ENCODE measurements at regions of chr19 and their contacts with region 1.

Region 1: GRCh38 chr19:6460101-6460853 is 685 bp upstream of the SLC25A23 start:
- DNase-seq: peak; percentile 98
- H3K4me3 Mint-ChIP-seq: peak overlapping the region; percentile 91
- H3K27ac Mint-ChIP-seq: peak overlapping the region; percentile 88
- H3K4me1 Mint-ChIP-seq: peaks cover 21% of the 10 kb centered on the region
- H3K27me3 Mint-ChIP-seq: no peaks in the 10 kb centered on the region

Region 2: DNA sequence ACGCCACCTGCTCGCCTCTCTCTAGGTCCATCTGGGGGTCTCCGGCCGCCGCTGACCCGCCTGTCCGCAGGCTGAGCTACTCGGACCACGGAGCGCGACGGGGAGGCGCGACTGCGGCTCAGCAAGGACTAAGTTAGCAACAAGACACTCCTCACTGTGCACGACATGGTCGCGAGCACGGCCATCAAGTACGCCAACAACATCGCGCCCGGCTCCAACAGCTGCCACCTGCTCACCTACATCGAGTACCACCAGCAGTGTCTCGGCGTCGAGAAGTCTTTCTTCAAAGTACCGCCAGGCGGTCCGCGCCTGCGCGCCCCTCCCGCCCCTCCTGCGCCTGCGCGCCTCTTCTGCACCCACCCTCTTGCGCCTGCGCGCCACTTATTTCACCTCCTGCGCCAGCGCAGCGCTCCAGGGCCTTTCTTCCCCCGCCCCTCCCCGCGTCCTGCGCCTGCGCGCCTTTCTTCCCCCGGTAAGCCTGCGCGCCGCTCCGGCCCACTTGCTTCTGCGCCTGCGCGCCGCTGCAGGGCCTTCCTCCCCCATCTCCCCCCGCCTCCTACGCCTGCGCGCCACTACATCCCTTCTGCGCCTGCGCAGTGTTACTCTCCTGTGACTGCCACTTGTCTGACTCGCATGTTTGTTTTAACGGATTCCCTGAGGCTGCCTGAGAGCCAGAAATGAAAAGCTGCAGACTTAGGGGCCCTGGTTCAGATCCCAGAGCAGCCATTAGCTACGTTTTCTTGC is 260.9 kb before region 1 on chr19:
- CTCF ChIA-PET with region 1: no interaction called
- POLR2A ChIA-PET with region 1: no interaction called
- intact Hi-C with region 1: loop called (anchors 1 kb)
- DNase-seq: peak; percentile 100
- H3K4me3 Mint-ChIP-seq: peak overlapping the region; percentile 98
- H3K27ac Mint-ChIP-seq: peak overlapping the region; percentile 84
- H3K4me1 Mint-ChIP-seq: peaks cover 13% of the 10 kb centered on the region
- H3K27me3 Mint-ChIP-seq: peaks cover 1% of the 10 kb centered on the region

Region 3: GRCh38 chr19:6393074-6393983 is 66.9 kb before region 1 on chr19 and contains the start of gene GTF2F1:
- CTCF ChIA-PET with region 1: no interaction called
- POLR2A ChIA-PET with region 1: no interaction called
- intact Hi-C with region 1: loop called (anchors 2 kb)
- DNase-seq: peak; percentile 94
- H3K4me3 Mint-ChIP-seq: peak within 1 kb of the TSS; percentile 94
- H3K27ac Mint-ChIP-seq: peak within 1 kb of the TSS; percentile 93
- H3K4me1 Mint-ChIP-seq: peaks cover 24% of the 10 kb centered on the region
- H3K27me3 Mint-ChIP-seq: no peaks in the 10 kb centered on the region
- total RNA-seq, gene GTF2F1: 67.0 to 70.9 TPM

Region 4: DNA sequence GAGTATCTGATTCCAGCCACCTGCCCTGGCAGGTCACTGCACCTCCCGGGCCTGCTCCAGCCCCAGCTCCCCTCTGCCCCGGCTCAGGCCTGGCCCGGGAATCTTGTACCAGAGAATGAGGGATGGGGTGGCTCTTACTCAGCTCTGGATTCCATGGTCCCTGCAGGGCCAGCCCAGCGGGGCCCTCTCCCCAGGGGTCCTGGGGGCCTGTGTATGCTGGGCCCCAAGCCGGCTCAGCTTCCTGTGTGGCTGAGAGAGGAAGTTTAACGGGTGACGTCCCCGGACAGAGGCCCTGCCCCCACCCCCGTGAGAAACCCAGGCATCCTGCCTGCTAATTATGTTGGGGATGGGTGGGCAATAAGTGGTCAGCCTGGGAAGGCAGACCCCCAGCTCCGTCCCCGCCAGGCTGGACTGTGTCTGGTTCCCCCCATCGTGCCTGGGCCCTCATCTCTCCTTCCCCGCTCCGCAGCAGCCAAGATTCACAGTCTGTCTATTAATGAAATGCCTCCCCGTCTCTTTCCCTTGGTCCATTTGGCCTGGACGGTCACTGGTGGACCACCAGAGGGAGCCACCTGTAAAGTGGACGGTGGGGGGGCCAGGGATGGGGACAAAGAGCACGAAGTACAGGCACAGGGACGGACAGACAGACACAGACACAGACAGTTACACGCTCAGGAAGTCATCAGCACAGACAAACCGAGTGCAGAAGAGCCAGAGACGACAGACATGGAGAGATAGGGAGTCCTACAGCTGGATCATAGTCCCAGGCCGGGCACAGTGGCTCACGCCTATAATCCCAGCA is 21.5 kb after region 1 on chr19 and contains the start of gene DENND1C:
- CTCF ChIA-PET with region 1: interaction called, 5 read pairs
- POLR2A ChIA-PET with region 1: interaction called, 3 read pairs
- intact Hi-C with region 1: loop called (anchors 1 kb)
- DNase-seq: peak; percentile 85
- H3K4me3 Mint-ChIP-seq: peak within 1 kb of the TSS; percentile 100
- H3K27ac Mint-ChIP-seq: peak within 1 kb of the TSS; percentile 98
- H3K4me1 Mint-ChIP-seq: peaks cover 30% of the 10 kb centered on the region
- H3K27me3 Mint-ChIP-seq: no peaks in the 10 kb centered on the region
- total RNA-seq, gene DENND1C: 62.1 to 69.3 TPM

Region 5: DNA sequence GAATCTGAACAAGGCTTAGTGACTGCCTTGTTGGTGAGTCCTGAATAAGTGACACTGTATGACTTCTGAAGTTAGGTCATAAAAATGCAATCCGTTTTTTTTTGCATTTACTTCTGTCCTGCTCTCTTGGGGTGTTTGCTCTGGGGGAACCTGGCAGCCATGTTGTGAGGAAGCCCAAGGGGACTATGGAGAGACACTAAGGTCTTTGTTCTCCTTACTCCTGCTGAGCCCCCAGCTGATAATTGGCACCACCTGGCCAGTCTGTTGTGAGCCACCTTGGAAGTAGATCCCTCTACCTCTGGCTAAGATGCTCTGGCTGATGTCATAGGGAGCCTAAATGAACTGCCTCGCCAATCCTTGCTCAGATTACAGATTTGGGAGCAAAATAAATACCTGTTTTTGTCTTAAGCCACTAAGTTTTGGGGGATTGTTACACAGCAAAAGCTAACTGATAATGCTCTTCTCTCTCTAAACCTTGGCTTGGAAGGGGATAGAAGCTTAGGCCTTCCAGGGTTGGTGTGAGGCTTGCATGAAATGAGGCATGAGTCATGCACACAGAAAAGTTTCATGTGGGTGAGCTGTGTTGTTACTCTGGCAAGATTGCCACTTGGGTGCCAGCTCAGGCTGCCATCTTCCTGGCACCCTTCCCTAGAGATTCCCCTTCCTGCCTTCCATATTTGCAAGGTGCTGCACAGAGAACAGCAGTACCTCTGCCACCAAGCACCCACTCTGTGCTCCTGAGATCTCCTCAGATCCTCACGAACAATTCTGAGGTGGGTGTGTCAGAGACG is 31.7 kb after region 1 on chr19:
- CTCF ChIA-PET with region 1: no interaction called
- POLR2A ChIA-PET with region 1: no interaction called
- intact Hi-C with region 1: no loop called
- DNase-seq: no peak
- H3K4me3 Mint-ChIP-seq: no peak overlapping the region
- H3K27ac Mint-ChIP-seq: no peak overlapping the region
- H3K4me1 Mint-ChIP-seq: peaks cover 16% of the 10 kb centered on the region
- H3K27me3 Mint-ChIP-seq: no peaks in the 10 kb centered on the region

Region 6: DNA sequence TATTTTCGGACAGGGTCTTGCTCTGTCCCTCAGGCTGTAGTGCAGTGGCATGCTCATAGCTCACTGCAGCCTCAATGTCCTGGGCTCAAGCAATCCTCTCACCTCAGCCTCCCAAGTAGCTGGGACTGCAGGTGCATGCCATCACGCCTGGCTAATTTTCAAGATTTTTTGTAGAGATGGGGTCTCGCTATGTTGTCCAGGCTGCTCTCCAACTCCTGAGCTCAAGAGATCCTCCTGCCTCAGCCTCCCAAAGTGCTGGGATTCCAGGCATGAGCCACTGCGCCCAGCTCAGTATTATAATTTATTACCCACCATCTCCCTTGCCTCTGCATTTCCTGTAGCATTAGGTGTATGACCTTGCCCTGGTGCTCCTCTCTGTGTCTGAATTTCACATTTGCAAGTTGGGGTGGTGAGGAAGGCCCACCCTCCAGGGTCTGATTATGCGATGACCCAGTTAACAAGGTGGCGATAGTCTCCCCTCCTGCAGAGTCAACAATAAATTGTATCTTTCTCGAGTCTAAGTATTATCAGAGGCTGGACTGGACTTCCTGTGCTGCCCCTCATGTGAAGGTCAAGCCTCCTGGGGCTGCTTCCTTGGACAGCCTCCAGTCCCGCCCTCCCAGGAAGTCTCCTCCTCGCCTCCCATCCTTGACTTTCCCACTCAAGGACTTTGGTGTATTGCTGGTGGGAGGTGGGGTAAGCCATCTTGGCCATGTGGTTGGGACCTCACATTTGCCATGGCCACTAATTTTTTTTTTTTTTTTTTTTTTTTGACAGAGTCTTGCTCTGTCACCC is 43.3 kb after region 1 on chr19:
- CTCF ChIA-PET with region 1: no interaction called
- POLR2A ChIA-PET with region 1: no interaction called
- intact Hi-C with region 1: loop called (anchors 2 kb)
- DNase-seq: no peak
- H3K4me3 Mint-ChIP-seq: no peak overlapping the region
- H3K27ac Mint-ChIP-seq: no peak overlapping the region
- H3K4me1 Mint-ChIP-seq: peaks cover 10% of the 10 kb centered on the region
- H3K27me3 Mint-ChIP-seq: peaks cover 17% of the 10 kb centered on the region

Measured in activated CD4-positive, alpha-beta memory T cell treated with anti-CD3 and anti-CD28 coated beads for 36 hours (primary cell).